Mammary epithelial cell (primary cell): ENCODE measurements at regions of chrX and their contacts with region 1.

Region 1: GRCh38 chrX:30635630-30636029 is 17.6 kb upstream of the GK start:
- DNase-seq: no peak
- H3K4me3 ChIP-seq: no peak overlapping the region
- H3K27ac ChIP-seq: no peak overlapping the region
- H3K4me1 ChIP-seq: no peaks in the 10 kb centered on the region
- H3K27me3 ChIP-seq: no peaks in the 10 kb centered on the region
- CTCF ChIP-seq: peak; percentile 26 to 45

Region 2: GRCh38 chrX:30468471-30468870 is 167.2 kb before region 1 on chrX:
- CTCF ChIA-PET with region 1: no interaction called
- dilution Hi-C with region 1: no loop called
- in situ Hi-C with region 1: no loop called
- intact Hi-C with region 1: no loop called
- DNase-seq: no peak
- H3K4me3 ChIP-seq: no peak overlapping the region
- H3K27ac ChIP-seq: no peak overlapping the region
- H3K4me1 ChIP-seq: no peaks in the 10 kb centered on the region
- H3K27me3 ChIP-seq: no peaks in the 10 kb centered on the region
- CTCF ChIP-seq: no peak

Region 3: DNA sequence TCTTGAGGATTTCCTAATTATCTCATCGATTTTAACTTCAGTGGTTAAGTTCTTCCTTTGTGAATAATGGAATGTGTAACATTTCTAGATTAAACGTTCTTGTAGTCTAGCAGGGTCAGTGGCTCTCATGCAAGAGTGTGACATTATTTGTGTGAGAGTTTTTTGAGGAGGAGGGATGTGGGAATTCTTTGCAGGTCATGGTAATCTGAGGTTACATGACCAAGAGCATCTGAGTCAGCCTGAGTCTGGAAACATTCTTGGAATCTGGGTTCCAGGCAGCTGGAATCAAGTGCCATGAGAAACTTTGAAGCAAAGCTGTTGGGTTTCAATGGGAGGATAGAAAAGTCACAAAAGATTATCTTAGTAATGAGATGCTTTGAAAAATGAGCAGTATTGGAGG is 67.1 kb after region 1 on chrX:
- CTCF ChIA-PET with region 1: no interaction called
- dilution Hi-C with region 1: no loop called
- in situ Hi-C with region 1: no loop called
- intact Hi-C with region 1: no loop called
- DNase-seq: no peak
- H3K4me3 ChIP-seq: no peak overlapping the region
- H3K27ac ChIP-seq: no peak overlapping the region
- H3K4me1 ChIP-seq: no peaks in the 10 kb centered on the region
- H3K27me3 ChIP-seq: no peaks in the 10 kb centered on the region
- CTCF ChIP-seq: no peak

Region 4: GRCh38 chrX:30713061-30713525 is 77.5 kb after region 1 on chrX:
- CTCF ChIA-PET with region 1: no interaction called
- dilution Hi-C with region 1: no loop called
- in situ Hi-C with region 1: no loop called
- intact Hi-C with region 1: loop called (anchors 1 kb)
- DNase-seq: peak; percentile 32
- H3K4me3 ChIP-seq: no peak overlapping the region
- H3K27ac ChIP-seq: no peak overlapping the region
- H3K4me1 ChIP-seq: no peaks in the 10 kb centered on the region
- H3K27me3 ChIP-seq: peaks cover 6% of the 10 kb centered on the region
- CTCF ChIP-seq: peak; percentile 81 to 87

Region 5: GRCh38 chrX:30822068-30822681 is 186.5 kb after region 1 on chrX:
- CTCF ChIA-PET with region 1: no interaction called
- dilution Hi-C with region 1: no loop called
- in situ Hi-C with region 1: no loop called
- intact Hi-C with region 1: loop called (anchors 5 kb)
- DNase-seq: no peak
- H3K4me3 ChIP-seq: no peak overlapping the region
- H3K27ac ChIP-seq: no peak overlapping the region
- H3K4me1 ChIP-seq: no peaks in the 10 kb centered on the region
- H3K27me3 ChIP-seq: no peaks in the 10 kb centered on the region
- CTCF ChIP-seq: peak; percentile 25 to 46